PC-9 (cell line): ENCODE measurements at regions of chr2 and their contacts with region 1.

Region 1: DNA sequence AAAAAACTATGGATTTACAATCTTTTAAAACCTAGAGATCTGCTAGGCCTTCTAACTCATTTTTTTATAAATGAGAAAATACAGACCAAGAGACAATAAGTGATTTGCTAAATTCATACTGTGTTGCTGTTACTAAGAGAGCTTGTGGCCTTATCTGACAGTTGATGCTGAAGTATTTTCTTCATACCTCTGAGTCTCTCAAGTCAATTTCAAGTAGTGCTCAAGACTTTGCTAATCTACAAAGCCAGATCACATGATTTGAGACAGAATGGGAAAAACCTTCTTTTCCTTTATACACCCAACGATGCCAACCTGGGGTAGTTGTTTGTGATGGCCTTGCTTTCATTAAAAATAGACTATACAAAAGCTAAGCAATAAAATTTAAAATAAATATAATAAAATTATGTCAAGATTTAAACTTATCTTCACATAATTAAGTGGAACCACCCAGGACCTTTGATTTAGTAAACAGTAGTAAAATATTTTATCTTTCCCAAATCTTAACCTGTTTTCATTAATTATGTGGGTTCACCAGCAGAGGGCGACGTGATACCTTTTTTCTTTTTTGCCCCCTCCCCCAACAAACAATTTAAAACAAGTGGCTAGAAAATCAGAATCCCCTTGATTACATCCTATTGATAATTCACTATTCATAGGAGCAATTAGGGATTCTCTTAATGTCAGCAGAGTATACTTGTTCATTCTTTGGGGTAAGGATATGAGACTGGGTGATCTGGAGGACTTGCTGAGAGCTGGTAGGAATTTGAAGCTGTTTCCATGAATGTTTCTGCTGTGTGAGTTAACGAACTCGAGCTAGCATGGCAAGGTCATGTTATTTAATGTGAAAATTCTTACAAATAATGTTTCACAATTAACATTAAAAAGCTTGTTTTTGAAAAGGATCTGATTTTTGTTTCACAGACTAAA is 49.6 kb upstream of the SLC5A7 start:
- DNase-seq: peak in 1 of 2 experiments; percentile 3
- H3K4me3 ChIP-seq: no peak overlapping the region
- H3K27ac ChIP-seq: no peak overlapping the region
- H3K4me1 ChIP-seq: no peaks in the 10 kb centered on the region
- H3K27me3 ChIP-seq: peaks cover 19% of the 10 kb centered on the region
- CTCF ChIP-seq: peak; percentile 79

Region 2: GRCh38 chr2:106890606-106891005 is 1046.1 kb before region 1 on chr2:
- CTCF ChIA-PET with region 1: no interaction called
- POLR2A ChIA-PET with region 1: interaction called, 10 read pairs
- intact Hi-C with region 1: no loop called
- DNase-seq: no peak
- H3K4me3 ChIP-seq: no peak overlapping the region
- H3K27ac ChIP-seq: no peak overlapping the region
- H3K4me1 ChIP-seq: no peaks in the 10 kb centered on the region
- H3K27me3 ChIP-seq: no peaks in the 10 kb centered on the region
- CTCF ChIP-seq: no peak

Region 3: DNA sequence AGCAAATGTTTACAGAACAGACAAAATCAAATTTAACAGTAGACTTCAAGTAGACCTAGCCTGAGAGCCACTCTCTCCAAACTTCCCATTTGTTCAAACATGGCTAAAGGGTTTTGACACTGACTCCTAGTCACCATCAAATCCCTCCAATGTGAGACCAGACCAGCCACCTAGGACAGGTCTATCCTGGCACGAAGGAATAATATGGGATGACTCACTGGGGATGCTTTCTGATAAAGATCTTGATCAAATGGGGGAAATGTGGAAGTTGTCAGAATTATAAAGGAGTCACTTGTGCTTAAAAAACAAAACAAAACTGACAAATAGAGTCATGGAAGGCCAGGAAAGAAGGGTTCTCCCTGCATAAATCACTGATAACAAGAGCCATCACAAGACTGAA is 956.6 kb after region 1 on chr2:
- CTCF ChIA-PET with region 1: no interaction called
- POLR2A ChIA-PET with region 1: no interaction called
- intact Hi-C with region 1: no loop called
- DNase-seq: no peak
- H3K4me3 ChIP-seq: no peak overlapping the region
- H3K27ac ChIP-seq: no peak overlapping the region
- H3K4me1 ChIP-seq: peaks cover 5% of the 10 kb centered on the region; the same call in 1 of the 2 replicates
- H3K27me3 ChIP-seq: no peaks in the 10 kb centered on the region
- CTCF ChIP-seq: no peak